Activated CD4-positive, alpha-beta memory T cell treated with anti-CD3 and anti-CD28 coated beads for 36 hours (primary cell): ENCODE measurements at regions of chr12 and their contacts with region 1.

Region 1: GRCh38 chr12:47904713-47905310 is at the start of gene VDR:
- DNase-seq: peak; percentile 87
- H3K4me3 Mint-ChIP-seq: peak within 1 kb of the TSS; percentile 97
- H3K27ac Mint-ChIP-seq: peak within 1 kb of the TSS; percentile 93
- H3K4me1 Mint-ChIP-seq: peaks cover 43% of the 10 kb centered on the region
- H3K27me3 Mint-ChIP-seq: peaks cover 7% of the 10 kb centered on the region
- total RNA-seq, gene VDR: 156 TPM

Region 2: GRCh38 chr12:47705566-47706425 is 199.0 kb before region 1 on chr12 and contains the start of gene RPAP3:
- CTCF ChIA-PET with region 1: no interaction called
- POLR2A ChIA-PET with region 1: no interaction called
- intact Hi-C with region 1: loop called (anchors 2 kb)
- DNase-seq: peak; percentile 99
- H3K4me3 Mint-ChIP-seq: peak within 1 kb of the TSS; percentile 96
- H3K27ac Mint-ChIP-seq: peak within 1 kb of the TSS; percentile 95
- H3K4me1 Mint-ChIP-seq: peaks cover 50% of the 10 kb centered on the region
- H3K27me3 Mint-ChIP-seq: no peaks in the 10 kb centered on the region
- total RNA-seq, gene RPAP3: 49.4 to 50.2 TPM

Region 3: DNA sequence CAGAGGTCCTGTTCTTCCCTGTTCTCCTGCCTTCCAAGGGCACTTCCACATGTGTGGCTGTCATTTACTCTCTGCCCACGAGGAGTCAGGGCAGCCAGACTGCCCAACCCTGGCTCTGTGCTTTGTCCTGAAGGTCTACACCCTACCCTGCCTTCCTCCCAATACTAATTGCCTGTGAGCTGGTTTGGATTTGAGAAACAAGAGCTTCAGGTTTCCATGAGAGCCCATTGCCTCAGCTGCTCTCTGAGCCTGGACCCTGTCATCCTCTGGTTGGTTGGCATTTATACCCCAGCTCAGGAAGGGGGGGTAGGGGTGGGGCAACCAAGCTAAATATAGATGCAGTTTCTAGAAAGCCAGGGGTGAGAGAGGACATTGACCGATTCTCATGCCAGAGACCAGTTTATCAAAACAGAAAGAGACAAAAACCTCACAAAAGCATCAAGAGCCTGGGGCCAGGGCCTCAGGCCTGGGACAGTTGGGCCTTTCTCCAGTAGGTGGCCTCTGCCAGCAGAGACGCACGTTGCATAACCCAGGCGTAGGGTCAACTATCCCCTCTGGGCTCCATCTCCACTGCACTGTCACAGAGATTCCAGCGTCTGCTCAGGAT is 34.5 kb before region 1 on chr12:
- CTCF ChIA-PET with region 1: interaction called, 12 read pairs
- POLR2A ChIA-PET with region 1: interaction called, 13 read pairs
- intact Hi-C with region 1: no loop called
- DNase-seq: no peak
- H3K4me3 Mint-ChIP-seq: no peak overlapping the region
- H3K27ac Mint-ChIP-seq: peak overlapping the region; percentile 76
- H3K4me1 Mint-ChIP-seq: peaks cover 70% of the 10 kb centered on the region
- H3K27me3 Mint-ChIP-seq: no peaks in the 10 kb centered on the region

Region 4: GRCh38 chr12:47889040-47889439 is 15.8 kb before region 1 on chr12:
- CTCF ChIA-PET with region 1: interaction called, 34 read pairs
- POLR2A ChIA-PET with region 1: interaction called, 76 read pairs
- intact Hi-C with region 1: loop called (anchors 1 kb)
- DNase-seq: peak; percentile 51
- H3K4me3 Mint-ChIP-seq: peak overlapping the region; percentile 64
- H3K27ac Mint-ChIP-seq: peak overlapping the region; percentile 86
- H3K4me1 Mint-ChIP-seq: peaks cover 86% of the 10 kb centered on the region
- H3K27me3 Mint-ChIP-seq: no peaks in the 10 kb centered on the region

Region 5: GRCh38 chr12:47949441-47950308 is 44.9 kb after region 1 on chr12:
- CTCF ChIA-PET with region 1: interaction called, 13 read pairs
- POLR2A ChIA-PET with region 1: no interaction called
- intact Hi-C with region 1: loop called (anchors 1 kb)
- DNase-seq: peak; percentile 72
- H3K4me3 Mint-ChIP-seq: no peak overlapping the region
- H3K27ac Mint-ChIP-seq: no peak overlapping the region
- H3K4me1 Mint-ChIP-seq: peaks cover 5% of the 10 kb centered on the region
- H3K27me3 Mint-ChIP-seq: peaks cover 3% of the 10 kb centered on the region

Region 6: DNA sequence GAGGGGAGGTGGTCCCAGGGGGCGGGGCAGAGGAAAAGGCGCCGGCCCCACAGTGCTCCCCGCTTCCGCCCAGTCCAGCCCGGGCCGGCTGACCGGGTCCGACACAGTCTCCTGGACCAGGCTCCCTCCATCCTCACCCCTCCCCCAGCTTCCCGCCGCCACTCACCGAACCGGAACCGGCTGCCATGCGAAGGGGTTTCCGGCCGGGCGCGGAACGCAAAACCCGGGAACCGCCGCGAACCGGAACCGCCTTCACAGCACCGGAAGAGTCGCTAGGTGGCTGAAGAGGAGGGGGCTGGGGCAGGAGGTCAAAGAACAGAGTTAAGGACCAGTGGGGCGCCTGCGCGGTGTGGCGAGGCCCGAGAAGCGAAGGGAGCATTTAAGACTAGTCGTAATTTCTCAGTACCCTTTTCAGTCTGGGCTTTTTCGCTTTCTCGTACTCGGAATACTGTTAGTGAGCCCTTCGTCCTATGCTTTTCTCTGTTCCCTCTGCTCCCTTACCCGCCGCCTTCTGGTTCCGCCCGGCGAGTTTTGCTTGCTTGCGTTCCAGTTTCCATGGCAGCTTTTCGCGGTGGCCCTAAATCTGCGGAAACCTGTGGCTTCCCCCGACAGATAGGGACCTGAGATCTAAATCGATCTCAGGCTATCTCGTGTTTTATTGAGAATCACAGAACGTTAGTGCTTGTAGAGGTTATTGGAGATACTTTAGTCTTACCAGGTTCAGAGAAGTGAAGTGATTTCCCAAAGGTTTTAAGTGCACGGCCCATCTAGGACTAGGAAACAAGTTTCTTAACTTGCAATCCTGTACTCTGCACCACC is 201.3 kb after region 1 on chr12 and contains the start of gene SENP1:
- CTCF ChIA-PET with region 1: no interaction called
- POLR2A ChIA-PET with region 1: interaction called, 7 read pairs
- intact Hi-C with region 1: loop called (anchors 2 kb)
- DNase-seq: peak; percentile 94
- H3K4me3 Mint-ChIP-seq: peak within 1 kb of the TSS; percentile 86
- H3K27ac Mint-ChIP-seq: peak within 1 kb of the TSS; percentile 94
- H3K4me1 Mint-ChIP-seq: peaks cover 47% of the 10 kb centered on the region
- H3K27me3 Mint-ChIP-seq: no peaks in the 10 kb centered on the region
- total RNA-seq, gene SENP1: 37.7 to 41.6 TPM

Region 7: GRCh38 chr12:49110464-49111155 is 1205.8 kb after region 1 on chr12 and contains the start of gene LMBR1L:
- CTCF ChIA-PET with region 1: no interaction called
- POLR2A ChIA-PET with region 1: no interaction called
- intact Hi-C with region 1: loop called (anchors 5 kb)
- DNase-seq: peak; percentile 97
- H3K4me3 Mint-ChIP-seq: peak within 1 kb of the TSS; percentile 95
- H3K27ac Mint-ChIP-seq: peak within 1 kb of the TSS; percentile 80
- H3K4me1 Mint-ChIP-seq: peaks cover 24% of the 10 kb centered on the region
- H3K27me3 Mint-ChIP-seq: no peaks in the 10 kb centered on the region
- total RNA-seq, gene LMBR1L: 55.0 to 59.1 TPM